Gastrocnemius medialis (tissue), 4 donors: ENCODE measurements at regions of chr11 and their contacts with region 1.

Region 1: GRCh38 chr11:67353317-67354074 is at the start of gene POLD4:
- DNase-seq: peak; percentile 97 to 99
- ATAC-seq: peak; percentile 82 to 83
- H3K4me3 ChIP-seq: peak within 1 kb of the TSS; percentile 79 to 93 (median 84)
- H3K27ac ChIP-seq: peak within 1 kb of the TSS; percentile 94 to 100 (median 98)
- H3K4me1 ChIP-seq: peaks cover 39 to 48% of the 10 kb centered on the region in 2 donors
- H3K27me3 ChIP-seq: no peaks in the 10 kb centered on the region
- CTCF ChIP-seq: no peak
- POLR2A ChIP-seq: peak; percentile 87 to 90
- total RNA-seq, gene POLD4: 57.4 to 115 (median 87.9) TPM

Region 2: DNA sequence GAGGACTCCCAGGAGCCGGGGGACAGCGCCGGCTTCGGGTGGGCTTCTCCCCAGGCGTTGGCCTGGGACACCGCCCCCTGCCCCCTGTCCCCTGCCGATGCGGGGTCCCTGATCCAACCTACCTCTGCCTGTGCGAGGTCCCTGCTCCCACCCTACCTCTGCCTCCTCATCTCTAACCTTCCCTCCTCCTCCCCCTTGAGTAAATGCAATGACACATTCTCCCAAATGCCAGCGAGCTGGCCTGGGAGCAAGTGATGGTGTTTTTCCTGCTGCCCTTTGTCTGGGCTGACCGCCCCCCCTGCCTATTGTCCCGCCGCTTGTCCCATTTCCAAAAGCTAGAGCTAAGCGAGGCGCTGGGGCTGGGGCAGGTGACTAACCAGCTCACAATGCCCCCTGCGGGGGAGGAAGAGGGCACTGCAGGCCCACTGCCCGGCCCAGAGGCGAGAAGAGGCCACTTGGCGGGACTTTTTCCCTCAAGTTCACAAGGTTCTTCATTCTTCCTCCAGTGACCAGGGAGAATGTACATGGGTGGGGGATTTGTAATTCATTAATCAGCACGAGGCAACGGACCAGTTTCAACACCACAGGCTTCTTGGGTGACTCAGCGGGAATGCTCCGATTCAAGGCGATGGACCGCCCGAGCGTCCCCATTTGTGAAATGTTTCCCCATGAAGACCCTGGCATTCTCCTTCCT is 20.6 kb after region 1 on chr11:
- in situ Hi-C with region 1: no loop called
- intact Hi-C with region 1: loop called (anchors 1 kb)
- DNase-seq: peak; percentile 41 to 68
- ATAC-seq: peak; percentile 58 to 69
- H3K4me3 ChIP-seq: peak overlapping the region; percentile 58 to 75 (median 69)
- H3K27ac ChIP-seq: peak overlapping the region; percentile 73 to 82 (median 78)
- H3K4me1 ChIP-seq: peaks cover 8 to 13% of the 10 kb centered on the region in 2 donors
- H3K27me3 ChIP-seq: peaks cover 23 to 43% (median 31%) of the 10 kb centered on the region in 3 donors
- CTCF ChIP-seq: peak; percentile 18 to 70 (median 53)
- POLR2A ChIP-seq: peak; percentile 22 to 24

Region 3: GRCh38 chr11:67382276-67383136 is 29.0 kb after region 1 on chr11:
- in situ Hi-C with region 1: loop called in 3 of 4 experiments (anchors 5 kb)
- intact Hi-C with region 1: loop called (anchors 1 kb)
- DNase-seq: peak; percentile 49 to 68
- ATAC-seq: peak; percentile 79 to 88
- H3K4me3 ChIP-seq: no peak overlapping the region
- H3K27ac ChIP-seq: no peak overlapping the region
- H3K4me1 ChIP-seq: no peaks in the 10 kb centered on the region
- H3K27me3 ChIP-seq: peaks cover 0 to 10% (median 0%) of the 10 kb centered on the region in 3 donors
- CTCF ChIP-seq: peak; percentile 94 to 99 (median 97)
- POLR2A ChIP-seq: no peak

Region 4: DNA sequence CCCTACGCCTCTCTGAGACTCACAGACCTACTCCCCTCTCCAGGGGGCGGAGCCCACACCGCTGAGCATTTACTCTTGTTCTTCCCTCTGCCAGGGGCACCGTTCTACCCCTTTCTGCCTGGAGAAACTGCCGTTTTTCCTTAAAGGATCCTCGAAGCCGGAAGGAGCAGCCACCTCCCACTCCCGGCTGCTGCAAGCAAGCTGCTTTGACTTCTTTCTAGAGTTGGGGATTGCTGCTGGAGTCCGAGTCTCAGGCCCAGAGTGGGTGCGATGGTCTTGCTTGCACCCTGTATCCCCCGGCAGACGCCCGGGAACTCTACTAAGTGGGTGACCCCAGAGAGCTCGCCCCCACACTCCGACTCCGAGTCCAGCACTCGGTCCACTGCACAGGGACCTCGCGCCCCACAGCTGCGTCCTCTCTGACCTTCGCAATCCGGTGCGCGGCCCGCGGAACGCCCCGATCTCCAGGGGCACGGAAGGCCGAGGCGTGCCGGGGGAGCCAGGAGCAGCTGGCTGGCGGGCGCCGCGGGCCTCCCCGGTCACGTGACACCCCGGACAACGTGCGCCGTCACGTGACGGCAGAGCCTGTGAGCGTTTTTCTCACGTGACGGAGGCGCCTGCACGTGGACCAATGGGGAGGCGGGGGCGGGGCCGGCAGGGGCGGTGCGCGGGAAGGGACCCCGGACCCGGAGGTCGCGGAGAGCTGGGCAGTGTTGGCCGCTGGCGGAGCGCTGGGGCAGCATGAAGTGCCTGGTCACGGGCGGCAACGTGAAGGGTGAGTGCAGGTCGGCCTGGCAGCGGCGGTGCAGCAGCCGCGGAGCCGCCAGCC is 38.0 kb after region 1 on chr11 and contains the start of gene RAD9A:
- in situ Hi-C with region 1: loop called in 3 of 4 experiments (anchors 5 kb)
- intact Hi-C with region 1: no loop called
- DNase-seq: peak; percentile 92 to 94
- ATAC-seq: peak; percentile 90 to 92
- H3K4me3 ChIP-seq: peak within 1 kb of the TSS; percentile 59 to 83 (median 74)
- H3K27ac ChIP-seq: peak within 1 kb of the TSS; percentile 79 to 89 (median 86)
- H3K4me1 ChIP-seq: peaks cover 5 to 15% of the 10 kb centered on the region in 2 donors
- H3K27me3 ChIP-seq: no peaks in the 10 kb centered on the region
- CTCF ChIP-seq: peak in 2 of 5 experiments; percentile 64 to 73
- POLR2A ChIP-seq: peak; percentile 34 to 66
- total RNA-seq, gene RAD9A: 5.2 to 14.7 (median 7.7) TPM

Region 5: GRCh38 chr11:67606492-67607201 is 253.2 kb after region 1 on chr11 and contains the start of gene NDUFV1:
- in situ Hi-C with region 1: no loop called
- intact Hi-C with region 1: no loop called
- DNase-seq: peak; percentile 93 to 96
- ATAC-seq: peak; percentile 95 to 96
- H3K4me3 ChIP-seq: peak within 1 kb of the TSS; percentile 81 to 100 (median 92)
- H3K27ac ChIP-seq: peak within 1 kb of the TSS; percentile 89 to 97 (median 91)
- H3K4me1 ChIP-seq: peaks cover 16 to 23% of the 10 kb centered on the region in 2 donors
- H3K27me3 ChIP-seq: no peaks in the 10 kb centered on the region
- CTCF ChIP-seq: peak; percentile 41 to 88 (median 79)
- POLR2A ChIP-seq: peak; percentile 64 to 73
- total RNA-seq, gene NDUFV1: 306 to 608 (median 365) TPM